ENCODE measurements at regions of chr11 and their contacts with region 1.

Region 1: DNA sequence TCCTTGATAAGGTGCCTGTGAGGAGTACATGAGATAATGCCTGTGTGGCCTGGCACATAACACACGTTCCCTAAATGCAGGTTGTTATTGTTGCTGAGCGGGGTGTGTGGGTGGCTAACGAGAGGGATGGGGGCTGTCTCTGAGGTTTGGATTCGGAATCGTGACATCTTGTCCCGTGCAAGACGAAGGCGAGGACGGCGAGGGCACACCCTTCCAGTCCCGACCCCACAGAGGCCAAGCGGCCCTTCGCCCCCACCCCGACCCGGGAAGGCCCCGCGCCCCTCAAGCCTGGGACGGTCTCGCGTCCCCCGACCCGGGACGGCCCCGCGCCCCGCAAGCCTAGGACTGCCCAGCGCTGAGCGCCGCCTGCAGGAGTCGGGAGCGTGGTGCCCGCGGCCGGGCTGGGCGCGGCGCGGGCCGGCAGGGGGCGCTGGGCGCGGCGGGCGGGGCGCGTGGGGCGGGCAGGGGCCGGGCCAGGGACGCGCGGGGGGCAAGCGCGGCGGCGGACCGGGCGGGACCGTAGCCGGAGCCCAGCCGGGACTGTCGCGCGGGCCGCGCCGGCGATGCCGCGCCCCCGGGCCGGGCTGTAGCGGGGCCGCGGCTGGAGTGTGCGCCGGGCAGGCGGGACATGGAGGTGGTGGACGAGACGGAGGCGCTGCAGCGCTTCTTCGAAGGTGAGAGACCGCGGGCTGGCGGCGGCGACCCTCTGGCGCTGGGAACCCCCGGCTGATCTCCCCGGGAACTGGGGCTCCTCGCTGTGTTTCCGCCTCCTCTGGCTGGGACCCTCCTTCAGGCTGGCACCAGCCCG is at the start of gene MYRF:
- DNase-seq: no peak
- ATAC-seq: peak; percentile 90
- H3K4me3 ChIP-seq: peak within 1 kb of the TSS; percentile 44 to 58
- H3K27ac ChIP-seq: peak within 1 kb of the TSS; percentile 44; the same call in 1 of the 2 replicates
- H3K4me1 ChIP-seq: peaks cover 5% of the 10 kb centered on the region
- H3K27me3 ChIP-seq: no peaks in the 10 kb centered on the region
- CTCF ChIP-seq: peak; percentile 97
- total RNA-seq, gene MYRF: 2.8 TPM

Region 2: DNA sequence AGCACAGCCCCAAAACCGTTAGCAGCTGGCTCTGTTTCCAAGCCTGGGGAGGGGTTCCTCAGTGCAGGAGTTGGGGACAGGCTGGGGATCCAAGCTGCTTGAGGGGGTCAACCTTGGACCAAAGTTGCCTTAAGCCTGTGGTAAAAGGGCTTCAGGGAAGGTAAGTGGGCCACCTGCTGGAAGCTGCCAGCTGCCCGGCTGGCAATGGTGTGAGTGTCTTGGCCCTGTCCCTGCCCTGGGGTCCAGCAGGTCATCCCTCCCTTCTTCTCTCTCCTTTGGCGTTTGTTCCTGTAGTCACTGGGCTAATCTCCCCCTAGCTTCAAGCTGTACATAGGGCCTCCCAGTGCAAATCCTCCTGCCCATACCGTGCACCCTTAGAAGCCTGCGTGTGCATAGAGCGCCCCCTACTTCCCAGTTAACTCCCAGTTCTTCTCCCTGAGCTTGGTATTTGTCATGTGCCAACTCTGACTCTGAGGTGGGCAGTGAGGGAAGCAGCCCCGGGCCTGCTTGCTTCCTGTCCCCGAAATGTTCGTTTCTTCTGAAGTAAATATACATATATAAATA is 35.7 kb after region 1 on chr11:
- CTCF ChIA-PET with region 1: interaction called, 7 read pairs
- POLR2A ChIA-PET with region 1: no interaction called
- in situ Hi-C with region 1: no loop called
- intact Hi-C with region 1: loop called (anchors 5 kb)
- DNase-seq: no peak
- ATAC-seq: peak; percentile 26; the same call in 1 of the 2 replicates
- H3K4me3 ChIP-seq: no peak overlapping the region
- H3K27ac ChIP-seq: no peak overlapping the region
- H3K4me1 ChIP-seq: peaks cover 4% of the 10 kb centered on the region; the same call in 1 of the 2 replicates
- H3K27me3 ChIP-seq: no peaks in the 10 kb centered on the region
- CTCF ChIP-seq: peak; percentile 86; the same call in 1 of the 2 replicates